Activated naive CD8-positive, alpha-beta T cell treated with anti-CD3 and anti-CD28 coated beads, Interleukin-2, amount 10 ng/mL, durations not matched to agents 7 days and 5 days (primary cell): ENCODE measurements at regions of chr21 and their contacts with region 1.

Region 1: DNA sequence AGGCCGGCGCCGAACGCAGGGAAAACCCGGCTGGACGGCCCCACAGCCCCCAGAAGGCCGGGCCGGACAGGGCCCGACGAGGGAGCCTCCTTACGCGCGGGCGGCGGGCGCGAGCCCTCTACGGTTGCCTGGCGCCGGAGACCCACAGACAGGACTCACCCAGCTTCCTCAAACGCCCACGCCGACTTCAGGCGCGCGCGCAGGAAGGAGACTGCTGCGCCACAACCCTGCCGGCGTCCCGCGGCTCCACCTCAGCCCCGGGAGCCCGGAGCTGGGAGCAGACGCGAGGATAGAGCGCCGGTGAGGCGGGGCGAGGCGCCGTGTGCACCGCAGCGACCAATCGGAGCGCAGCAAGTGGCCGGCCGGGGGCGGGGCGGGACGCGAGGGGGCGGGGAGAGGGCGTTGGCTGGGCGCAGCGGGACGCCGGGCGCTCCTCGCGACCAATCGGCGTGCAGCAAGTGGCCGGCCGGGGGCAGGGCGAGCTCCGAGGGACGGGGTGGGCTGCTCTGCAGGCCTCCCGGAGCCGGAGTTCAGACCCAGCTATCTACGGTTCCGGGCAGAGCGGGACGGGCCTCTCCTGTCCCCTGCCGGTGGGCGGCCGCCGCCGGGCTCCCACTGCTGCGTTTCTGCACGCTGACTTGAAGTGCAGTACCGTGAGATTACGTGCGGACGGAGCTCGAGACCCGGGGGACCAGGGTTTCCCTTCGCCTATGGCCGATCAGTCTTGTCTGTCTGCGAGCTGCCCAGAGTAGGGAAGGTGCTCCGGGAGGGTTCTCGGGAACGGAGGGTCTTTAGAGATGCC is at the start of gene TMEM50B:
- DNase-seq: peak; percentile 95
- ATAC-seq: peak; percentile 93
- H3K4me3 Mint-ChIP-seq: peak within 1 kb of the TSS; percentile 96
- H3K27ac Mint-ChIP-seq: peak within 1 kb of the TSS; percentile 92
- H3K4me1 Mint-ChIP-seq: peaks cover 18% of the 10 kb centered on the region
- H3K27me3 Mint-ChIP-seq: peaks cover 3% of the 10 kb centered on the region
- total RNA-seq, gene TMEM50B: 72.6 to 80.3 TPM

Region 2: GRCh38 chr21:33324291-33325221 is 155.3 kb before region 1 on chr21 and contains the start of gene IFNAR1:
- POLR2A ChIA-PET with region 1: interaction called, 15 read pairs
- DNase-seq: peak; percentile 98
- ATAC-seq: peak; percentile 97
- H3K4me3 Mint-ChIP-seq: no peak within 1 kb of the TSS
- H3K27ac Mint-ChIP-seq: no peak within 1 kb of the TSS
- H3K4me1 Mint-ChIP-seq: peaks cover 19% of the 10 kb centered on the region
- H3K27me3 Mint-ChIP-seq: peaks cover 7% of the 10 kb centered on the region
- total RNA-seq, gene IFNAR1: 35.7 to 36.3 TPM

Region 3: GRCh38 chr21:33386222-33386784 is 93.6 kb before region 1 on chr21:
- POLR2A ChIA-PET with region 1: interaction called, 14 read pairs
- DNase-seq: no peak
- ATAC-seq: no peak
- H3K4me3 Mint-ChIP-seq: no peak overlapping the region
- H3K27ac Mint-ChIP-seq: no peak overlapping the region
- H3K4me1 Mint-ChIP-seq: peaks cover 37% of the 10 kb centered on the region
- H3K27me3 Mint-ChIP-seq: peaks cover 32% of the 10 kb centered on the region

Region 4: GRCh38 chr21:33491373-33492102 is 11.7 kb after region 1 on chr21 and contains the start of gene DNAJC28:
- POLR2A ChIA-PET with region 1: interaction called, 95 read pairs
- DNase-seq: peak; percentile 96
- ATAC-seq: peak; percentile 98
- H3K4me3 Mint-ChIP-seq: peak within 1 kb of the TSS; percentile 82
- H3K27ac Mint-ChIP-seq: peak within 1 kb of the TSS; percentile 82
- H3K4me1 Mint-ChIP-seq: peaks cover 8% of the 10 kb centered on the region
- H3K27me3 Mint-ChIP-seq: peaks cover 4% of the 10 kb centered on the region
- total RNA-seq, gene DNAJC28: 1.2 to 1.5 TPM

Region 5: DNA sequence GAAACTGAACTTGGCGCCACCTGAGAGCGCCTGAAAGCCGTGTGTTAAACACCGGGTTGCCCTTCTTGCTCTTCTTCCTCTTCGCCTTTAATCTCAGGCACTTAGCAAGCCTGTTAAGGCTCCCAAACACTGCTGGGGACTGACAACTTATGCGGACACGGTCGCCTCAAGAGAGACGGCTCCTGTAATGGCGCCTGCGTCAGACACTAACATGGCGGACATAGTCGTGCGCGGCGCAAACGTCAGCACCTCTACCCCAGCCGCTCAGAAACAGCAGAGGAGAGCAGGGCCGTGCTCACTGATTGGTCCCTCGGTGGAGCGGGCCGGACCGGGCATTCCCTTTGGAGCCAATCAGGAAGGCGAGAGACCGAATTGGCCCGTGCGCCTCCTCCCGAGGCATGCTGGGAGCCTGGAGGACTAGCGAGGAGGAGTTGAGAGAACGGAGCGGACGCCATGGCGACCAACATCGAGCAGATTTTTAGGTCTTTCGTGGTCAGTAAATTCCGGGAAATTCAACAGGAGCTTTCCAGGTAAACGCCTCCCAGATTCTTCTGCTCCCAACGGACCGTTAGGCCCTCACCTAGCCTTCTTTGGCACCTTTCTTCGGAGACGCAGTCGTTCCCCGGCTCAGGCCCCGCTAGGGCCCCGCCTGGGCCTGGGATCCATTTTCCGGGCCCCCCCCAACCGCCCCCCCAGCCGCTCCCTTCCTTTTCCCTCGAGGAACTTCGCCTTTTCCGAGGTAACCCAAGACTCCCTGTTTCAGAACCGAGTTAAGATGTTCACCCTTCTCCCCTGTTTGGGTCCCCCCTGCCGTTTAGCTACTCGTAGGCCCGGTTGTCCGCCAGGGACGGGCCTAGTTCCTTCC is 63.0 kb after region 1 on chr21 and contains the start of gene SON:
- POLR2A ChIA-PET with region 1: interaction called, 33 read pairs
- DNase-seq: peak; percentile 92
- ATAC-seq: peak; percentile 96
- H3K4me3 Mint-ChIP-seq: peak within 1 kb of the TSS; percentile 96
- H3K27ac Mint-ChIP-seq: peak within 1 kb of the TSS; percentile 99
- H3K4me1 Mint-ChIP-seq: peaks cover 38% of the 10 kb centered on the region
- H3K27me3 Mint-ChIP-seq: no peaks in the 10 kb centered on the region
- total RNA-seq, gene SON: 357 to 376 TPM

Region 6: DNA sequence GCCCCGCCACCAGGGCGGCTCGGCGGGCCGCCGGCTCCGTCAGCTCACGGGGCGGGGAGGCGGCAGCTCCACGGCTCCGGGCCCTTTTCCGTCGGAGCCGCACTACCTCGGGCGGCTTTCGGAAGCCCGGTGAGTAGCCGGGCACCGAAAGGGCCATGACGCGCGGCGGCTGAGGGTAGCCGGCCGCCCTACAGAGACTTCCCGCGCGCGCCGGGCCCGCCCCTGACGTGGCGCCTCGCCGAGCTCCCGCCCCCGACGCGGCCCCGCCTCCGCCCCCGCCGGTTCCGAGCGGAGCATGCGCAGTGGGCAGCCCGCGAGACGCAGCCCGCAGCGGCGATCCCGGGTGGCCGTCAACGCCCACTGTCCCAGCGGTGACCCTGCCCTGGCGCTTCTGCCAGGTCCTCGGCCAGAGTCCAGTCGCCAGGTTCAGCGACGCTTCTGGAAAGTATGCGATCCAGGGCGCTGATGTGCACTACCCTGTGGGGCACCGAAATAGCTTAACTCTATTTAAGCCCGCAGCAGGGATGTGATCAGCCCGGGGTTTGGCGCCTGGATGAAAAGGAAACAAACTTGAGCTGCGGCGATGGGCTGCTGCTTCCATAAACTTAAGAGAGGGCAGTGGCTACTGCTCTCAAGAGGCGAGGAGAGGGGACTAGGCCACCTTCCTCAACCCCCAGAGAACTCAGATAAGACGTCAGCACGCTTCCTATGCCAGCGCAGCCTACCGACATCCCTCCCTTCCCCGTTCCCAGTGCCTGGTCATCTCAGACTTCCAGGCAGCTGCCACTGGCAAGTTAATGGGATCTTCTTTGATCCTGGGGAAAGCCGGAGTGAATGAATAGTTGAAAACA is 108.8 kb after region 1 on chr21 and contains the start of gene DONSON:
- POLR2A ChIA-PET with region 1: interaction called, 16 read pairs
- DNase-seq: peak; percentile 98
- ATAC-seq: peak; percentile 95
- H3K4me3 Mint-ChIP-seq: peak within 1 kb of the TSS; percentile 97
- H3K27ac Mint-ChIP-seq: peak within 1 kb of the TSS; percentile 89
- H3K4me1 Mint-ChIP-seq: peaks cover 25% of the 10 kb centered on the region
- H3K27me3 Mint-ChIP-seq: no peaks in the 10 kb centered on the region
- total RNA-seq, gene DONSON: 29.0 to 33.6 TPM